ENCODE measurements at regions of chr10 and their contacts with region 1.

Region 1: DNA sequence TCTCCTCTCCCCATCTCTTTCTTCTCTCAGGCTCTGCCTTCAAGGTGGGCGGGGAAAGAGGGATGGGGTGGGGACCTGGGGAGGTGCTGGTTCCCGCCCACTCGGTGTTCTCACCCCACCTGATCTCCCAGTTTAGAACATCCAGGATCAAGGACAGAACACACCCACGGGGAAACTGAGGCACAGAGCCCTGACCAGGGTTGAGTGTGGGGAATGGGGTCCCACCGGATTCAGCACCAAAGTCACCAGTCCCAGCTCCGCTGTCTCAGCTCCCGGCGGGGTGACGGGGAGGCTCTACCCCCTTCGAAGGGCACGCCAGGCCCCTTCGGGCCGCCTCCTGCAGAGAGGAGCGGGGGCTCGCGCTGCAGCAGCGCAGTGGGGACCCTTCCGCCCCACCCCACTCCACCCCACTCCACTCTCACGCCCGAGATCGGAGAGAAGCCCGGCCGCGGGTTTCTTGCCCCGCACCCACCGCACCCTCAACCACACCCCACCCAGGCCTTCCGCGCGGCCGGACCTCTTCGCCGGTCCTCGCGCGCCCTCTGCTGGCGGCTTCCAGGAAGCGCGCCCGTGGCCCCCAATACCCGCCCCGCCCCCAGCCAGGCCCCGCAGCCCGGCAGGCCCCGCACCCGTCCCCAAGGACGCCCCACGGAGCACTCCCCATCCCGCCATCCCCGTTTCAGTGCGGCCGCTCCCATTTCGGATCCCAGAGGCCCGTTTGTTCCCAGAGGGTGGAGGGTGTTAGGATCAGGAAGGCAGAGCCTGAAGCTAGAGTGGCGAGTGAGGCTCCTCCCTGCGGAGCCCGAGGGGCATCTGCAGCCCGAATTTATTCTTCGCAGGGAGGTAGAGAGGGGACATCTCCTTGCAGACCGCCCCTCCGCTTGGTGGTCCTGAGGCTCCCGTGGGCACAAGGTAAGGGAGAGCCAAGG is 18.0 kb downstream of the POLL start:
- DNase-seq: peak; percentile 59
- ATAC-seq: peak; percentile 66
- H3K4me3 ChIP-seq: peak overlapping the region; percentile 82
- H3K27ac ChIP-seq: no peak overlapping the region
- H3K4me1 ChIP-seq: peaks cover 11% of the 10 kb centered on the region; the same call in 1 of the 2 replicates
- H3K27me3 ChIP-seq: no peaks in the 10 kb centered on the region
- CTCF ChIP-seq: peak; percentile 57

Region 2: GRCh38 chr10:101161494-101162299 is 408.4 kb before region 1 on chr10:
- CTCF ChIA-PET with region 1: interaction called, 4 read pairs
- POLR2A ChIA-PET with region 1: no interaction called
- intact Hi-C with region 1: loop called (anchors 5 kb)
- DNase-seq: peak; percentile 77
- ATAC-seq: peak; percentile 84
- H3K4me3 ChIP-seq: peak overlapping the region; percentile 52; the same call in 1 of the 2 replicates
- H3K27ac ChIP-seq: no peak overlapping the region
- H3K4me1 ChIP-seq: no peaks in the 10 kb centered on the region
- H3K27me3 ChIP-seq: peaks cover 13% of the 10 kb centered on the region; the same call in 1 of the 2 replicates
- CTCF ChIP-seq: peak; percentile 90

Region 3: DNA sequence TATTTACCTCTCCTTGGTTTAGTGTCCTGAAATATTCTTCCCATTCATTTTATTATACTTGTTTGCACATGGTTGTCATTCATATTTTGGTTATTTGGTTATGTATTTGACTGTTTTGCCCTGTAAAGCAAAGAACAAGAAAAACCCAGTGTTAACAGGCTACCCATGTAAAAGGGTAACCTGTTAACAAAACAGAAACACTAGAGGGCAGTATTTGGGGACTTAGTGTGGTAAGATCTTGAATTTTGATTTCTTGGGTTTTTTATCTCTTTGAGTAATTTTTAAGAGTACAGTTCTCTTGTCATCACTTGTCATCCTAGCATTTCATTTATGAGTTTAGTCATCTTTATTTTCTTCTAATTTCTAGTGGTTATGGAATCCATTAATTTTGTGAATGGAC is 33.3 kb before region 1 on chr10:
- CTCF ChIA-PET with region 1: no interaction called
- POLR2A ChIA-PET with region 1: no interaction called
- intact Hi-C with region 1: loop called (anchors 1 kb)
- DNase-seq: peak; percentile 53
- ATAC-seq: no peak
- H3K4me3 ChIP-seq: no peak overlapping the region
- H3K27ac ChIP-seq: no peak overlapping the region
- H3K4me1 ChIP-seq: no peaks in the 10 kb centered on the region
- H3K27me3 ChIP-seq: no peaks in the 10 kb centered on the region
- CTCF ChIP-seq: peak; percentile 69

Region 4: GRCh38 chr10:101580486-101581399 is 10.6 kb after region 1 on chr10:
- CTCF ChIA-PET with region 1: no interaction called
- POLR2A ChIA-PET with region 1: no interaction called
- intact Hi-C with region 1: no loop called
- DNase-seq: no peak
- ATAC-seq: no peak
- H3K4me3 ChIP-seq: no peak overlapping the region
- H3K27ac ChIP-seq: no peak overlapping the region
- H3K4me1 ChIP-seq: no peaks in the 10 kb centered on the region
- H3K27me3 ChIP-seq: no peaks in the 10 kb centered on the region
- CTCF ChIP-seq: no peak

Region 5: GRCh38 chr10:102140928-102141540 is 570.9 kb after region 1 on chr10:
- CTCF ChIA-PET with region 1: no interaction called
- POLR2A ChIA-PET with region 1: no interaction called
- intact Hi-C with region 1: no loop called
- DNase-seq: no peak
- ATAC-seq: no peak
- H3K4me3 ChIP-seq: no peak overlapping the region
- H3K27ac ChIP-seq: no peak overlapping the region
- H3K4me1 ChIP-seq: no peaks in the 10 kb centered on the region
- H3K27me3 ChIP-seq: no peaks in the 10 kb centered on the region
- CTCF ChIP-seq: no peak

Measured in PC-3 (cell line).